ENCODE measurements at regions of chr14 and their contacts with region 1.

Region 1: DNA sequence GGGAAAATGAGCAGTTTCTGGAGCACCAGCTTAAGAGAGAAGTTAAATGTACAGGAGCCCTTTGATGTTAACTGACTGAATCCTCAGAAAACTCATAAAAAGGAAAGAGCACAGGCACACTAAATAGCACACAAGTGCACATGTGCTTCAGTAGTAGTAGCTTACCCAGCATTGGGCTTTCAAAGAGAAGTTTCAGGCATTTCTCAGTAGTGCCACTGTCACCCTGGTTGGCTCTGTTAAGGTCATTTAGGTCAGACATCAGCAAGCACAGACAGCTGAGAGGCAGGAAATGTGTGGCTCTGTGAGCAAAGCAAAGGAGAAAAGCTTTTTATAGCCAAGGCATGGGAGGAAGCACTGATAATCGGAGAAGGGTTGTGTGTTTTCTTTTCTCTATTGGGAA is 96.3 kb upstream of the HIF1A start:
- DNase-seq: peak; percentile 66
- H3K4me3 Mint-ChIP-seq: peak overlapping the region; percentile 14
- H3K27ac Mint-ChIP-seq: peak overlapping the region; percentile 80
- H3K4me1 Mint-ChIP-seq: peaks cover 48% of the 10 kb centered on the region
- H3K27me3 Mint-ChIP-seq: no peaks in the 10 kb centered on the region

Region 2: DNA sequence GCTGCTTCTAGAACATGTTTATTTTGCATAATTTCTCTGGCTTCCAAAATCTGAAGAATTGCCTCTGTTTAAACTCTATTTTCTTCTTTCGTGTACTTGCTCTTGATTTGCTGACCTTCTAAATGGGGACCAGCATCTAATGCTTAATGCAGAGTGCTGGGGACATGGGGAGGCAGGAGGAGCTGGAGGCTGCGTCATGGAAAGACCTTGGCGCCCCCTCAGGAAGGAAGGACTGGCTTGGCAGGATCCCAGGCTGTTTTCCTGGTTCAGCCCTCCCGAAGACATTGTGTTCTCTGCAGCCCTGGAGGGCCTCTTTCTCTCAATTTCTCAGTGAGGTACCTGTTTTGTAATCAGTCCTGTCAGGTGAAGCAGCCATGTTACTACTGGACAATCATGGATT is 272.1 kb before region 1 on chr14:
- CTCF ChIA-PET with region 1: no interaction called
- intact Hi-C with region 1: loop called (anchors 1 kb)
- DNase-seq: no peak
- H3K4me3 Mint-ChIP-seq: peak overlapping the region; percentile 63
- H3K27ac Mint-ChIP-seq: peak overlapping the region; percentile 95
- H3K4me1 Mint-ChIP-seq: peaks cover 70% of the 10 kb centered on the region
- H3K27me3 Mint-ChIP-seq: no peaks in the 10 kb centered on the region

Region 3: DNA sequence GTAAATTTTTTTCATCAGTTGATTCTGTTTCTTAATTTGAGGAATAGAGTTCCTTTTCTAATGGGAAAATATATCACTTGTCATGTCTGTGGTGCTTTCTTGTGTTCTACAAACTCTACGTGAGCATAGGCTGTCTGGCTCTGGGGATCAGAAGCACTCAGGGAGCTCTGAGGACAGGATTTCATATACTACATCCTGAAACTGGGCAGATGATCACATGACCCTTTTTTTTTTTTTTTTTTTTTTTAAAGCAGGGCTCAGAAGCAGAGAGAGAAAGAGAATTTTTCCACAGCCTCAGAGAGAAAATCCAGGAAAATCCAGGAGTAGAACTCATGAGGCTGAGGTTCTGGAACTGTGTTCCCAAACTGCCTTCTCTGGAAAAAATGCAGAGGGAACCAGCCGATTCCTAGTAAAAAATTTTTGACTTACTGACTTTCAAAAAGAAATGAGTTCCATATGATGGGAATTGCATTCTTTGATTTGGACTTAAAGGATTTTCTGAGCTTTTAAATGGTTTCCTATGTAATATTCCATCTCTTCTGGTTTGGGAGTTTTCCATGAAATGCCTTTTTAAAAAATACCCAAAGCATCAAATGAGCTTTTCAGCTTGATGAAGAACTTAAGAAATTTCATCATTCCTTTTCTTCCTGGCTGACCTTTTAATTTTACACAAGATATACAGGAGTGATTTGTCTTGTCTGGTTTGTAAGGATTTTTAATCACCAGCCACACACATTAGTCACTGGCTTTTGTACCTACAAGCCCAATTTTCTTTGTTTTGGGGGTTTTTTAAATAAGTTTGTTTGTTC is 86.8 kb before region 1 on chr14:
- CTCF ChIA-PET with region 1: interaction called, 3 read pairs
- intact Hi-C with region 1: loop called (anchors 1 kb)
- DNase-seq: peak; percentile 46
- H3K4me3 Mint-ChIP-seq: peak overlapping the region; percentile 56
- H3K27ac Mint-ChIP-seq: peak overlapping the region; percentile 100
- H3K4me1 Mint-ChIP-seq: peaks cover 95% of the 10 kb centered on the region
- H3K27me3 Mint-ChIP-seq: no peaks in the 10 kb centered on the region

Region 4: GRCh38 chr14:61553725-61554641 is 45.0 kb before region 1 on chr14:
- CTCF ChIA-PET with region 1: no interaction called
- intact Hi-C with region 1: loop called (anchors 1 kb)
- DNase-seq: no peak
- H3K4me3 Mint-ChIP-seq: no peak overlapping the region
- H3K27ac Mint-ChIP-seq: peak overlapping the region; percentile 97
- H3K4me1 Mint-ChIP-seq: peaks cover 66% of the 10 kb centered on the region
- H3K27me3 Mint-ChIP-seq: no peaks in the 10 kb centered on the region

Region 5: GRCh38 chr14:61573748-61574513 is 25.0 kb before region 1 on chr14:
- CTCF ChIA-PET with region 1: interaction called, 3 read pairs
- intact Hi-C with region 1: loop called (anchors 1 kb)
- DNase-seq: peak; percentile 65
- H3K4me3 Mint-ChIP-seq: no peak overlapping the region
- H3K27ac Mint-ChIP-seq: peak overlapping the region; percentile 74
- H3K4me1 Mint-ChIP-seq: peaks cover 78% of the 10 kb centered on the region
- H3K27me3 Mint-ChIP-seq: no peaks in the 10 kb centered on the region

Region 6: DNA sequence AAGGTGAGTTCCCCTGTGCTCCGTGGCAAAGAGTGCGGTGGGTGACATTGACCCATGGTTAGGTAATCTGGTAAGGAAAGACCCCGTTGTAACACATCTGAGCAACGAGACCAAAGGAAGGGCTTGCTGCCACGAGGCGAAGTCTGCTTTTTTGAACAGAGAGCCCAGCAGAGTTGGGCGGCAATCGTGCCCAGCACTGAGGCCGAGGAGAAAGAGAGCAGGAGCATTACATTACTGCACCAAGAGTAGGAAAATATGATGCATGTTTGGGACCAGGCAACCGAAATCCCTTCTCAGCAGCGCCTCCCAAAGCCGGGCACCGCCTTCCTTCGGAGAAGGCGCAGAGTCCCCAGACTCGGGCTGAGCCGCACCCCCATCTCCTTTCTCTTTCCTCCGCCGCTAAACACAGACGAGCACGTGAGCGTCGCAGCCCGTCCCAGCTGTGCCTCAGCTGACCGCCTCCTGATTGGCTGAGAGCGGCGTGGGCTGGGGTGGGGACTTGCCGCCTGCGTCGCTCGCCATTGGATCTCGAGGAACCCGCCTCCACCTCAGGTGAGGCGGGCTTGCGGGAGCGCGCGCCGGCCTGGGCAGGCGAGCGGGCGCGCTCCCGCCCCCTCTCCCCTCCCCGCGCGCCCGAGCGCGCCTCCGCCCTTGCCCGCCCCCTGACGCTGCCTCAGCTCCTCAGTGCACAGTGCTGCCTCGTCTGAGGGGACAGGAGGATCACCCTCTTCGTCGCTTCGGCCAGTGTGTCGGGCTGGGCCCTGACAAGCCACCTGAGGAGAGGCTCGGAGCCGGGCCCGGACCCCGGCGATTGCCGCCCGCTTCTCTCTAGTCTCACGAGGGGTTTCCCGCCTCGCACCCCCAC is 96.1 kb after region 1 on chr14 and contains the start of gene HIF1A:
- CTCF ChIA-PET with region 1: interaction called, 5 read pairs
- intact Hi-C with region 1: loop called (anchors 1 kb)
- DNase-seq: peak; percentile 98
- H3K4me3 Mint-ChIP-seq: peak within 1 kb of the TSS; percentile 94
- H3K27ac Mint-ChIP-seq: peak within 1 kb of the TSS; percentile 93
- H3K4me1 Mint-ChIP-seq: peaks cover 44% of the 10 kb centered on the region
- H3K27me3 Mint-ChIP-seq: no peaks in the 10 kb centered on the region
- total RNA-seq, gene HIF1A: 398 to 417 TPM

Measured in activated naive CD4-positive, alpha-beta T cell treated with anti-CD3 and anti-CD28 coated beads for 36 hours (primary cell).